Right ventricle myocardium superior (tissue), 1 donor: ENCODE measurements at regions of chr6 and their contacts with region 1.

Region 1: DNA sequence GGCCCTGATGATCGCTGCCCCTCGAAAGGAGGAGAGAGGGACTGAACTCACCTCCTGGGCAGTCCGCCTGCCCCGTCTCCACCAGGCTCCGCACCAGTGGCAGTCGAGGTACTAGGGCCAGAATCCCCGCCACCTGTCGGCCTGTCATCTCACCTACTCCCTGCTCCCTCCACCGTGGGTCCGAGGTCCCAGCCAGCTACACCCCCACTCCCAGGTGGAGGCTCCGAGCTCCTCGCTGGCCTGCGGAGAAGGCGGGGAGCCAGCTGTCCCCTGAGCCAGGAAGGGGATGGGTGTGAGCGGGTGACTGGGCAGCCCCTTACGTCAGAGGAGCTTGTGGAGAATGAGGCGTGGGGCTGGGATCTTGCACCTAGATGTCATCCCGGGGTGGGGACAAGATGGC is 1066.5 kb upstream of the MANEA start:
- DNase-seq: peak; percentile 34
- ATAC-seq: no peak

Region 2: GRCh38 chr6:94278146-94278545 is 232.7 kb before region 1 on chr6:
- intact Hi-C with region 1: loop called (anchors 5 kb)
- DNase-seq: no peak
- ATAC-seq: no peak